CD4-positive, alpha-beta memory T cell (primary cell): ENCODE measurements at regions of chr20 and their contacts with region 1.

Region 1: GRCh38 chr20:34111702-34112599 is at the start of gene EIF2S2:
- DNase-seq: peak; percentile 93 to 97 (median 97)
- H3K4me3 ChIP-seq: peak within 1 kb of the TSS; percentile 92 to 94
- H3K4me3 Mint-ChIP-seq: peak within 1 kb of the TSS; percentile 90 to 99 (median 94)
- H3K27ac ChIP-seq: peak within 1 kb of the TSS; percentile 95
- H3K27ac Mint-ChIP-seq: peak within 1 kb of the TSS; percentile 91 to 99 (median 96)
- H3K4me1 ChIP-seq: peaks cover 47% of the 10 kb centered on the region
- H3K4me1 Mint-ChIP-seq: peaks cover 32 to 52% (median 40%) of the 10 kb centered on the region in 4 donors
- H3K27me3 ChIP-seq: no peaks in the 10 kb centered on the region
- H3K27me3 Mint-ChIP-seq: no peaks in the 10 kb centered on the region
- total RNA-seq, gene EIF2S2: 52.2 to 53.1 TPM

Region 2: DNA sequence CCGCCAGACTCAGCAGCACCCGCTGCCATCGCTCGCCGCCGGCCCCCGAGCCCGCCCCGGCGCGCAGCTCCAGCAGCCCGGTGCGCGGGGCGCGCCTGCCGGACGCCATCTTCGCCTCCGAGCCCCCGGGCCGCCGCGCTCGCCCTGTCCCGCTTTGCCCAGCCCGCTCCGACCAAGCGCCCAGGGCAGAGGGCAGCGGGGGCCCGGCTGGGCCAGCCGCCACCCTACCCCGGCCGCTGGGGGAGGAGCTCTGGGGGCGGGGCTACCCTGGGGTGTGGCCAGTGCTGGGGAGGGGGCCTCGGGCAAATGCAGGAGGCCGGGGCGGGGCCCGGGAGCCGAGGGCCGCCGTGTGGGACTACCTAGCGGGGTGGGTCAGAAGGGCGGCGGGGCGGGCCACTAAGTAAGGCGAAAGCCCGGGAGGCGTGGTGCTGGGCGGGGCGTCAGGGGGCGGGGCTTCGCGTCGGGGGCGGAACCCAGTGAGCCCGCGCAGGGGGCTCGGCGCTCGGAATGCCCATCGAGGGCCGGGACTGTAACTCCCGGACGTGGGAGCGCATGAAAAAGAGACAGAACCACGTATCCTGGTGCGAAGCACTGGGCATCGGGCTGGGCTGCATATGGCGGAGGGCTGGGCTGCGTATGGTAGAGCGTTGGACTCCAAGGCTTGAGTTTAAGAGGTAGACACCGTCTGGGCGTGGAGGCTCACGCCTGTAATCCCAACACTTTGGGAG is 668.3 kb before region 1 on chr20 and contains the start of gene SNTA1:
- CTCF ChIA-PET with region 1: no interaction called
- POLR2A ChIA-PET with region 1: interaction called, 13 read pairs
- intact Hi-C with region 1: loop called (anchors 5 kb)
- DNase-seq: peak; percentile 80 to 88 (median 81)
- H3K4me3 ChIP-seq: peak within 1 kb of the TSS; percentile 42 to 85
- H3K4me3 Mint-ChIP-seq: peak within 1 kb of the TSS; percentile 92 to 97 (median 92)
- H3K27ac ChIP-seq: peak within 1 kb of the TSS; percentile 74
- H3K27ac Mint-ChIP-seq: peak within 1 kb of the TSS; percentile 90 to 97 (median 94)
- H3K4me1 ChIP-seq: peaks cover 17% of the 10 kb centered on the region
- H3K4me1 Mint-ChIP-seq: peaks cover 14 to 28% (median 22%) of the 10 kb centered on the region in 4 donors
- H3K27me3 ChIP-seq: no peaks in the 10 kb centered on the region
- H3K27me3 Mint-ChIP-seq: no peaks in the 10 kb centered on the region
- total RNA-seq, gene SNTA1: 5.1 to 5.7 TPM

Region 3: DNA sequence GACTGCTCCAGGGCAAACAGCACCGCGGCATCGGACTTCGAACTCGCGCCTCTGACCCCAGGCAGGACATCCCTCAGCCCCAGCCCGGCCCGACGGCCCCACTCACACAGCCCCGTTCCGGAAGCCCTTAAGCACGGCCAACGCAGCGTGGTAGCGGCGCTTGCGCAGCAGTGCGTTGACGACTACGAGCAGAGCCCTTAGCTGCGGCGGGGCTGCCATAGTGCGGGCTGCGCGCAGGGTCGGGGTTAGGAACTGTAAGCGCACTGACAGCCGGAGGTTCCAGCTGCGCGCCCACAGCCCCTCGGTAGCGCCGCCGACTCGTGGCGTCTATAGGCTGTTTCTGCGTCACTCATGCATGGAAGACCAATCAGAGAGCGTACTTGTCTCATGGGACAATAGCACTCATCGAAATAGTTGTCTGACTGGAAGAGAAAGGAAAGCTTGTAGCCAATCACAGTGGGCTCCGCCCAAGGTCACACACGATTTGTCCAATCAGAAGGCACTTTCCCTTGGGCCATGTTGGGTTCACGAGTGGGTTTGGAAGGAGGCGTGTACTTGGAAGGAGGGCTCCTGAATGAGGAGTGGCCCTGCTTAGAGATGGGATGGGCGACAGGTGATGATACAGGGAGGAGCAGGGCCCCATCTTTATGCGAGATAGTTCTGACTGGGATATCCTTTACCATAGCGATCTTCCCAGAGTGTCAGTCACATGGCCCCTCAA is 391.8 kb before region 1 on chr20 and contains the start of gene PXMP4:
- CTCF ChIA-PET with region 1: no interaction called
- POLR2A ChIA-PET with region 1: interaction called, 12 read pairs
- intact Hi-C with region 1: no loop called
- DNase-seq: peak; percentile 90 to 96 (median 94)
- H3K4me3 ChIP-seq: peak within 1 kb of the TSS; percentile 25 to 88
- H3K4me3 Mint-ChIP-seq: peak within 1 kb of the TSS; percentile 86 to 97 (median 90)
- H3K27ac ChIP-seq: peak within 1 kb of the TSS; percentile 67
- H3K27ac Mint-ChIP-seq: peak within 1 kb of the TSS; percentile 81 to 98 (median 92)
- H3K4me1 ChIP-seq: peaks cover 15% of the 10 kb centered on the region
- H3K4me1 Mint-ChIP-seq: peaks cover 18 to 40% (median 23%) of the 10 kb centered on the region in 4 donors
- H3K27me3 ChIP-seq: no peaks in the 10 kb centered on the region
- H3K27me3 Mint-ChIP-seq: no peaks in the 10 kb centered on the region
- total RNA-seq, gene PXMP4: 15.7 to 16.3 TPM

Region 4: DNA sequence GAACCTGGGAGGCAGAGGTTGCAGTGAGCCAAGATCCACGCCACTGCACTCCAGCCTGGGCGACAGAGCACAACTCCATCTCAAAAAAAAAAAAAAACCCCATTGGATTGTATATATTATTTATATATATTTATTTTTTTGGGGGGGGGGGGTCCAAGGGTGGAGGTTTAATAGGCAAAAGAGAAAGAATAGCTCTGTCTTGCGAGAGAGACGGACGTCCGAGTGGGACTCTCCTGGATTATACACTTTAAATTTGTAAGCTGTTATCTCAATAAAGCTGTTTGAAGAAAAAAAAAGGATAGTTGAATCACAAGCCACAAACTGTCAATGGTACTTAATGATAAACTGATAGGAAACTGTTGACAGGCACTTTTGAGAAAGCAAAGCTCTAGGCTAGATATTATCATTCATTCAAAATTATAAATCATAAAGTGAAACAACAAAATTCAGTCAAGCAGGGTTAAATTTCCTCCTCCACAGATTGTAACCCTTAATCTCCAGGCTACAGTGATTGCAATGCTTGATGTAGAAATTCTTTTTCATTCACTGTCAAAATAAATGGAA is 20.2 kb before region 1 on chr20:
- CTCF ChIA-PET with region 1: interaction called, 3 read pairs
- POLR2A ChIA-PET with region 1: interaction called, 14 read pairs
- intact Hi-C with region 1: no loop called
- DNase-seq: no peak
- H3K4me3 ChIP-seq: no peak overlapping the region
- H3K4me3 Mint-ChIP-seq: no peak overlapping the region
- H3K27ac ChIP-seq: no peak overlapping the region
- H3K27ac Mint-ChIP-seq: no peak overlapping the region
- H3K4me1 ChIP-seq: no peaks in the 10 kb centered on the region
- H3K4me1 Mint-ChIP-seq: peaks cover 0 to 5% (median 3%) of the 10 kb centered on the region in 4 donors
- H3K27me3 ChIP-seq: no peaks in the 10 kb centered on the region
- H3K27me3 Mint-ChIP-seq: no peaks in the 10 kb centered on the region

Region 5: GRCh38 chr20:34129518-34130162 is 17.7 kb after region 1 on chr20:
- CTCF ChIA-PET with region 1: interaction called, 9 read pairs
- POLR2A ChIA-PET with region 1: interaction called, 5 read pairs
- intact Hi-C with region 1: loop called (anchors 2 kb)
- DNase-seq: peak; percentile 65 to 74 (median 71)
- H3K4me3 ChIP-seq: no peak overlapping the region
- H3K4me3 Mint-ChIP-seq: peak overlapping the region in 6 of 8 donors; percentile 3 to 77 (median 36)
- H3K27ac ChIP-seq: no peak overlapping the region
- H3K27ac Mint-ChIP-seq: no peak overlapping the region
- H3K4me1 ChIP-seq: peaks cover 4% of the 10 kb centered on the region
- H3K4me1 Mint-ChIP-seq: peaks cover 4 to 6% (median 4%) of the 10 kb centered on the region in 4 donors
- H3K27me3 ChIP-seq: no peaks in the 10 kb centered on the region
- H3K27me3 Mint-ChIP-seq: peaks cover 4 to 6% of the 10 kb centered on the region in 2 donors

Region 6: DNA sequence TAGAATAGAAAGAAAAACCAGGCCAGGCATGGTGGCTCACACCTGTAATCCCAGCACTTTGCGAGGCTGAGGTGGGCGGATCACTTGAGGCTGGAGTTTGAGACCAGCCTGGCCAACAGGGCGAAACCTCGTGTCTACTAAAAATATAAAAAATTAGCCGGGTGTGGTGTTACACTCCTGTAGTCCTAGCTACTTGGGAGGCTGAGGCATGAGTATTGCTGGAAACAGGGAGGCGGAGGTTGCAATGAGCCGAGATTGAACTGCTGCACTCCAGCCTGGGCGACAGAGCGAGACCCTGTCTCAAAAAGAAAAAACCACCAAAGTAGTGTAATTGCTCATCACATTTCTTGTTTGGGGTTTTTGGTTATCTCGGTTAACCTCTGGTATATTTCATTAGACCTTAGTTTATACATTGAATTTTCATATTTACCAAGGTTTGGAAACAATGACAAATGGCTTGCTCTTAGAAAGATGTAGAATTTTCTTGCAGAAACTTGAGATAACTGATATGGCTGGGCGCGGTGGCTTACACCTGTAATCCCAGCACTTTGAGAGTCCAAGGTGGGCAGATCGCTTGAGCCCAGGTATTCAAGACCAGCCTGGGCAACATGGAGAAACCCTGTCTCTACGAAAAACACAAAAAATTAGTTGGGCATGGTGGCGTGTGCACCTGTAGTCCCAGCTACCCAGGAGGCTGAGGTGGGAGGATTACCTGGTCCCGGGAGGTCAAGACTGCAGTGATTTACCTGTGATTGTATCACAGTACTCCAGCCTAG is 265.3 kb after region 1 on chr20:
- CTCF ChIA-PET with region 1: no interaction called
- POLR2A ChIA-PET with region 1: no interaction called
- intact Hi-C with region 1: no loop called
- DNase-seq: no peak
- H3K4me3 ChIP-seq: no peak overlapping the region
- H3K4me3 Mint-ChIP-seq: peak overlapping the region in 1 of 8 donors; percentile 22
- H3K27ac ChIP-seq: no peak overlapping the region
- H3K27ac Mint-ChIP-seq: peak overlapping the region in 6 of 7 donors; percentile 15 to 88 (median 62)
- H3K4me1 ChIP-seq: peaks cover 15% of the 10 kb centered on the region
- H3K4me1 Mint-ChIP-seq: peaks cover 14 to 44% (median 23%) of the 10 kb centered on the region in 4 donors
- H3K27me3 ChIP-seq: no peaks in the 10 kb centered on the region
- H3K27me3 Mint-ChIP-seq: no peaks in the 10 kb centered on the region

Region 7: DNA sequence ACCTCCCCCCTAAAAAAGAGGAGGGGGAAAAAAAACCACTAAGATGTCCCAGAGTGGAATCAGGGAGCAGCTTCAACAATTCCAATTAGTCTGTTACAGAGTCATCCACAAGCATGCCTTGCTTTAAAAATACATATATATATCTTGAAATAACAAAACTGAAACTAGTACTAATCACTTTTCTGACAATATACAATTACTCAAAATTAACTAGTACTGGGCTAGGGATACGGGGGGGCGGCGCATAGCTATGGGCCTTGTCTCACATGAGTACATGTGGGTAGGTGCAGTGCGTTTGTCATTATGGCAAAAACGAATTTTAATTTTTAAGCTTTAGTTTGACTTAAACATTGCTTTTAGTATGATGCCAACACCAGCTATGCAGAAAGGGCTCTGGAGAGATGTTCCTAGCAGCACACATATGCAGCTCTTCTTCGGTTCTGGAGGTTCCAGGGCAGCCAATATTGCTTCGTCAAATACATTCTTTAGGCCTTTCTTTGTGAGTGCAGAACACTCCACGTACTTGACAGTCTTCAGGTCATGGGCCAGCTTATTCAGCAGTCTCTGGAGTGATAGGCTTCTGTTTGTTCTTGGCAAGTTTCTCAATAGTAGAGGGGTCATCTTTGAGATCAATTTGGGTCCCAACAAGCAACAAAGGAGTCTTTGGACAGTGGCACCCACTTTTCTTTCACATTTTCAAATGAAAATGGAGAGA is 289.9 kb after region 1 on chr20:
- CTCF ChIA-PET with region 1: no interaction called
- POLR2A ChIA-PET with region 1: no interaction called
- intact Hi-C with region 1: no loop called
- DNase-seq: no peak
- H3K4me3 ChIP-seq: no peak overlapping the region
- H3K4me3 Mint-ChIP-seq: no peak overlapping the region
- H3K27ac ChIP-seq: no peak overlapping the region
- H3K27ac Mint-ChIP-seq: peak overlapping the region in 6 of 7 donors; percentile 9 to 85 (median 46)
- H3K4me1 ChIP-seq: peaks cover 33% of the 10 kb centered on the region
- H3K4me1 Mint-ChIP-seq: peaks cover 29 to 60% (median 43%) of the 10 kb centered on the region in 4 donors
- H3K27me3 ChIP-seq: no peaks in the 10 kb centered on the region
- H3K27me3 Mint-ChIP-seq: no peaks in the 10 kb centered on the region